A549 (cell line): ENCODE measurements at regions of chr10 and their contacts with region 1.

Region 1: DNA sequence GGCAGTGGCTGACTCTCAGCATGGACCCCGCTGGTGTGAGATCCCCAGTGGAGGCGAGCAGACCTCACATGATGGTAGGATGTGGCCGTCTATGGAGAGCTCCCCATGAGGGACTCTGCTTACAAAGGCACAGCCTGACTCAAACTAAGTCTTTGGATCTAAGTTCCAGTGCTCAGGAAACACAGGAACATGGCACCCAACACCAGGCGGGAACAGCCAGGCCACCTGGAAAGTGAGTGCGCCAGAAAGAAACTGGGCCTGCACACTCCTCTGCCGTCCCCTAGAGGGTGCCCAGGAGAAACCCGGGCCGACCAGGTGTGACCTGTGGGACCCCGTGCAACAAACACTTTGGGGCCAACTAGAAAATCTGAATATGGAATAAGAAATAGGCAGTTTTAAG is 10.0 kb downstream of the PITRM1 start:
- DNase-seq: no peak
- ATAC-seq: peak; percentile 63 to 81; a peak in 4 of 6 replicates
- H3K4me3 ChIP-seq: no peak overlapping the region
- H3K27ac ChIP-seq: no peak overlapping the region
- H3K4me1 ChIP-seq: peaks cover 8% of the 10 kb centered on the region; the same call in 2 of the 3 replicates
- CTCF ChIP-seq: no peak
- EP300 ChIP-seq: no peak
- POLR2A ChIP-seq: no peak
- RAD21 ChIP-seq: 0 out of 5 replicates have a peak, but pooled peaks of 1 of the 2 experiments have one; percentile 13

Region 2: DNA sequence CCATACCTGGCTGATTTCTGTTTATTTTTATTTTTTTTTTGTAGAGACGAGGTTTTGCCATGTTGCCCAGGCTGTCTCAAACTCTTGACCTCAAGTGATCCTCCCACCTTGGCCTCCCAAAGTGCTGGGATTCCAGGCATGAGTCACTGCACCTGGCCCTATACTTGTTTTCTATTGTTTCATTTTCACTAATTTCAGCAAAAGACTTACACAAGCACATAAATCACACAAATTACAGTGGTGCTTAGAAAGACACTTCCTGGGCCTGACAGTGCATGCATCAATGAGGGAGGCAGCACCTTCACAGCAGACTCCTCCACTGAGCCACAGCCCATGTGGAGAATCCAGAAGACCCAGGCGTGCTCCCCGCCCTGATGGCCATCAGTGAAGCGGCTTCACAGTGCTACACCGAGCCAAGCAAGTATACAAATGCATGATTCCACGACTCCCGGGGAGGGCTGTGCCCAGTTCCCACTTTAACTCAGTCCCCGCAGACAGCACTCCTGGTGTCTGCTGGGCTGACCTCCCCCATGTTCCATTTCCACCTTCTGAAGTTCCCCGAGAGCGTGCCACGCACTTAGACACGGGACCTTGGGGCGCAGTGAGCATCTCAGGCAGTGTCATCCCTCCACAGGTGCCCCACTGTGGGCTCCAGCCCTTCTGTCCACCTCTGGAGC is 10.5 kb before region 1 on chr10:
- CTCF ChIA-PET with region 1: interaction called, 16 read pairs
- POLR2A ChIA-PET with region 1: interaction called, 3 read pairs
- DNase-seq: no peak
- ATAC-seq: no peak; a peak in 2 of 6 replicates
- H3K4me3 ChIP-seq: no peak overlapping the region
- H3K27ac ChIP-seq: no peak overlapping the region
- H3K4me1 ChIP-seq: no peaks in the 10 kb centered on the region
- CTCF ChIP-seq: no peak
- EP300 ChIP-seq: no peak
- POLR2A ChIP-seq: no peak
- RAD21 ChIP-seq: no peak